ENCODE measurements at regions of chr5 and their contacts with region 1.

Region 1: GRCh38 chr5:38441453-38442246 is 114.8 kb downstream of the LIFR start:
- DNase-seq: peak; percentile 36 to 89 (median 70)
- ATAC-seq: peak; percentile 87 to 99 (median 92)
- H3K4me3 ChIP-seq: no peak overlapping the region
- H3K4me3 Mint-ChIP-seq: no peak overlapping the region
- H3K27ac ChIP-seq: no peak overlapping the region
- H3K27ac Mint-ChIP-seq: peak overlapping the region; percentile 6 to 27
- H3K4me1 ChIP-seq: no peaks in the 10 kb centered on the region
- H3K4me1 Mint-ChIP-seq: peaks cover 1 to 2% (median 2%) of the 10 kb centered on the region in 3 donors
- H3K27me3 ChIP-seq: peaks cover 8 to 34% of the 10 kb centered on the region in 2 experiments
- H3K27me3 Mint-ChIP-seq: peaks cover 21 to 37% of the 10 kb centered on the region in 2 donors

Region 2: GRCh38 chr5:38420691-38421390 is 20.8 kb before region 1 on chr5:
- CTCF ChIA-PET with region 1: interaction called, 5 to 15 read pairs
- POLR2A ChIA-PET with region 1: no interaction called
- DNase-seq: peak in 10 of 35 experiments; percentile 1 to 38 (median 10)
- ATAC-seq: no peak
- H3K4me3 ChIP-seq: no peak overlapping the region
- H3K4me3 Mint-ChIP-seq: no peak overlapping the region
- H3K27ac ChIP-seq: no peak overlapping the region
- H3K27ac Mint-ChIP-seq: no peak overlapping the region
- H3K4me1 ChIP-seq: no peaks in the 10 kb centered on the region
- H3K4me1 Mint-ChIP-seq: no peaks in the 10 kb centered on the region
- H3K27me3 ChIP-seq: peaks cover 0 to 9% of the 10 kb centered on the region in 2 experiments
- H3K27me3 Mint-ChIP-seq: peaks cover 36 to 51% of the 10 kb centered on the region in 2 donors

Region 3: GRCh38 chr5:38467353-38468040 is 25.8 kb after region 1 on chr5:
- CTCF ChIA-PET with region 1: interaction called, 4 to 12 read pairs
- POLR2A ChIA-PET with region 1: no interaction called
- DNase-seq: no peak
- ATAC-seq: no peak
- H3K4me3 ChIP-seq: no peak overlapping the region
- H3K4me3 Mint-ChIP-seq: no peak overlapping the region
- H3K27ac ChIP-seq: no peak overlapping the region
- H3K27ac Mint-ChIP-seq: no peak overlapping the region
- H3K4me1 ChIP-seq: no peaks in the 10 kb centered on the region
- H3K4me1 Mint-ChIP-seq: peaks cover 0 to 2% (median 0%) of the 10 kb centered on the region in 3 donors
- H3K27me3 ChIP-seq: peaks cover 3 to 60% of the 10 kb centered on the region in 2 experiments
- H3K27me3 Mint-ChIP-seq: peaks cover 37 to 49% of the 10 kb centered on the region in 2 donors

Region 4: GRCh38 chr5:38551030-38552017 is 109.7 kb after region 1 on chr5:
- CTCF ChIA-PET with region 1: interaction called, 6 to 15 read pairs
- POLR2A ChIA-PET with region 1: no interaction called
- DNase-seq: peak in 1 of 35 experiments; percentile 26
- ATAC-seq: no peak
- H3K4me3 ChIP-seq: no peak overlapping the region
- H3K4me3 Mint-ChIP-seq: no peak overlapping the region
- H3K27ac ChIP-seq: no peak overlapping the region
- H3K27ac Mint-ChIP-seq: no peak overlapping the region
- H3K4me1 ChIP-seq: peaks cover 0 to 5% of the 10 kb centered on the region in 2 experiments
- H3K4me1 Mint-ChIP-seq: peaks cover 6 to 11% (median 10%) of the 10 kb centered on the region in 3 donors
- H3K27me3 ChIP-seq: peaks cover 9 to 10% of the 10 kb centered on the region in 2 experiments
- H3K27me3 Mint-ChIP-seq: peaks cover 38 to 39% of the 10 kb centered on the region in 2 donors

Region 5: GRCh38 chr5:38922199-38922598 is 480.5 kb after region 1 on chr5:
- CTCF ChIA-PET with region 1: interaction called, 11 to 42 read pairs
- POLR2A ChIA-PET with region 1: no interaction called
- DNase-seq: peak in 29 of 35 experiments; percentile 4 to 58 (median 27)
- ATAC-seq: peak; percentile 37 to 62 (median 56)
- H3K4me3 ChIP-seq: no peak overlapping the region
- H3K4me3 Mint-ChIP-seq: no peak overlapping the region
- H3K27ac ChIP-seq: no peak overlapping the region
- H3K27ac Mint-ChIP-seq: no peak overlapping the region
- H3K4me1 ChIP-seq: no peaks in the 10 kb centered on the region
- H3K4me1 Mint-ChIP-seq: no peaks in the 10 kb centered on the region
- H3K27me3 ChIP-seq: peaks cover 0 to 6% of the 10 kb centered on the region in 2 experiments
- H3K27me3 Mint-ChIP-seq: peaks cover 35 to 48% of the 10 kb centered on the region in 2 donors